CD8-positive, alpha-beta memory T cell (primary cell): ENCODE measurements at regions of chr11 and their contacts with region 1.

Region 1: GRCh38 chr11:125902927-125903710 is at the start of gene PUS3:
- DNase-seq: peak; percentile 74 to 89 (median 79)
- H3K4me3 ChIP-seq: peak within 1 kb of the TSS; percentile 74
- H3K4me3 Mint-ChIP-seq: peak within 1 kb of the TSS; percentile 90 to 98 (median 96)
- H3K27ac ChIP-seq: peak within 1 kb of the TSS; percentile 70
- H3K27ac Mint-ChIP-seq: peak within 1 kb of the TSS; percentile 84 to 96 (median 92)
- H3K4me1 ChIP-seq: peaks cover 20% of the 10 kb centered on the region
- H3K4me1 Mint-ChIP-seq: peaks cover 31 to 53% (median 47%) of the 10 kb centered on the region in 3 donors
- H3K27me3 ChIP-seq: peaks cover 18% of the 10 kb centered on the region
- H3K27me3 Mint-ChIP-seq: peaks cover 27 to 36% of the 10 kb centered on the region in 2 donors
- total RNA-seq, gene PUS3: 16.5 to 19.2 TPM

Region 2: DNA sequence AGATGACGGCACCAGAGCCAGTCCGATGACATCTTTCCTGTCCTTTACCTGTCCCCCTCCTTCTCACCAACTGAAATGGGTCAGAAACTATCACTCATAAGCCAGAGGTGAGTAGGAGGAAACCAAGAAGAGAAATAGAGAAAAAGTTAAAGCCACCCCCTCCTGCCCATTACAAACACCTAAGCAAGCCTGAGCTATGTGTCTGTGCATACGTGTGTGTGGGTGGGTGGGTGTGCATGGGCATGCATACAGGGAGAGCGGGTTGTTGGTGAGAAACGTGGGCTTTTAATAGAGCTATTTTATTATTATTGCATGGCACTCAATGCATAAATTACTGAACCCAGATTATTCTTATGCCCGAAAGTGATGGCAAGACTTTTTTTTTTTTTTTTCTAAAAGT is 67.4 kb before region 1 on chr11:
- CTCF ChIA-PET with region 1: no interaction called
- POLR2A ChIA-PET with region 1: no interaction called
- DNase-seq: no peak
- H3K4me3 ChIP-seq: no peak overlapping the region
- H3K4me3 Mint-ChIP-seq: no peak overlapping the region
- H3K27ac ChIP-seq: no peak overlapping the region
- H3K27ac Mint-ChIP-seq: no peak overlapping the region
- H3K4me1 ChIP-seq: no peaks in the 10 kb centered on the region
- H3K4me1 Mint-ChIP-seq: no peaks in the 10 kb centered on the region
- H3K27me3 ChIP-seq: no peaks in the 10 kb centered on the region
- H3K27me3 Mint-ChIP-seq: peaks cover 10 to 48% of the 10 kb centered on the region in 2 donors

Region 3: DNA sequence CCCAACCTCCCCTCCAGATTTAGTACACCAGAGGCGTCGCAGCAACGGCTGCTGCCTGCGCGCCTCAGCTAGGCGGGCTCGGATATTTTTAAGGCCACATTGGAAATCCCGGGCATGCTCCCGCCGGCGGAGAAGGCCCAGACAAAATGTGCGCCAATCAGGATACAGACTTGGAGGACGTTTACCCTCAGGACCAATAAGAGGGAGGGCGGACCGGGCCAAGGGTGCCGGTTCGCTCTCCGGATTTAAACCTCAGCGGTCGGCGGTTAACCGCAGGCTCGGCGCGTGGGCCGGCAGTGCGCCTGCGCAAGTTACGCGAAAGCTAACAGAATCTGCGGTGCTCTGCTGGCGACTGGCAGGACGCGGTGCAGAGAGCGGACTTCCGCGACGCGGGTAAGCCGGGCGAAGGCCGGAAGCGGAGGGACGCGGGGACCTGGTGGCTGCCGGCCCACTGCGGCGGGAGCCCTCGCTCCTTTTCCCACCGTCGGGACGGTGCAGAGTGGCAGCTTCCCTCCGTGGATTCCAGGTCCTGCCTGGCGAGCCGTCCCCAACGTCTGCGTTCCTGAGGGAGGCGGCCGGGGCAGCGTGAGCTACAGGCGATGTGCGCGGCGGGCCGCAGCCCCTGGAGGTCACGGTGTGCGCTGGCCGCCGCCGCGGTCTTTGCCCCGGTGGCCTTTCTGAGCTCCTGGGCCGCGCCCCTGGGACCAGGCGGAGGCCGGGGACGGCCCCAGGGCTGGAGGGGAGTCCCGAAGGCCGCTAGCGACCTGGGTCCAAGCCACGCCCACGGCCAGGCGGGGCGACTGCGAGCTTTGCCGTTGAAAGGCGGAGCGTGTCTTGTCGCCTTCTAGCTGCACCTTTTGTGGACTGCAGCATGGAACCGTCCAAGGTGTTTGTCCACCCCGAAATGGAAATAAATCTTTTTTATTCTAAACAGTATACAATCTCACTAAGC is 15.5 kb before region 1 on chr11 and contains the start of gene HYLS1:
- CTCF ChIA-PET with region 1: interaction called, 12 read pairs
- POLR2A ChIA-PET with region 1: interaction called, 25 read pairs
- DNase-seq: peak; percentile 91 to 96 (median 96)
- H3K4me3 ChIP-seq: peak within 1 kb of the TSS; percentile 79
- H3K4me3 Mint-ChIP-seq: peak within 1 kb of the TSS; percentile 89 to 97 (median 94)
- H3K27ac ChIP-seq: peak within 1 kb of the TSS; percentile 72
- H3K27ac Mint-ChIP-seq: peak within 1 kb of the TSS; percentile 93 to 99 (median 96)
- H3K4me1 ChIP-seq: peaks cover 11% of the 10 kb centered on the region
- H3K4me1 Mint-ChIP-seq: peaks cover 25 to 35% (median 34%) of the 10 kb centered on the region in 3 donors
- H3K27me3 ChIP-seq: no peaks in the 10 kb centered on the region
- H3K27me3 Mint-ChIP-seq: peaks cover 0 to 4% of the 10 kb centered on the region in 2 donors
- total RNA-seq, gene HYLS1: 7.3 to 8.1 TPM